Activated CD8-positive, alpha-beta T cell treated with anti-CD3 and anti-CD28 coated beads, Interleukin-2, amount 10 ng/mL, durations not matched to agents 7 days and 5 days (primary cell): ENCODE measurements at regions of chr19 and their contacts with region 1.

Region 1: DNA sequence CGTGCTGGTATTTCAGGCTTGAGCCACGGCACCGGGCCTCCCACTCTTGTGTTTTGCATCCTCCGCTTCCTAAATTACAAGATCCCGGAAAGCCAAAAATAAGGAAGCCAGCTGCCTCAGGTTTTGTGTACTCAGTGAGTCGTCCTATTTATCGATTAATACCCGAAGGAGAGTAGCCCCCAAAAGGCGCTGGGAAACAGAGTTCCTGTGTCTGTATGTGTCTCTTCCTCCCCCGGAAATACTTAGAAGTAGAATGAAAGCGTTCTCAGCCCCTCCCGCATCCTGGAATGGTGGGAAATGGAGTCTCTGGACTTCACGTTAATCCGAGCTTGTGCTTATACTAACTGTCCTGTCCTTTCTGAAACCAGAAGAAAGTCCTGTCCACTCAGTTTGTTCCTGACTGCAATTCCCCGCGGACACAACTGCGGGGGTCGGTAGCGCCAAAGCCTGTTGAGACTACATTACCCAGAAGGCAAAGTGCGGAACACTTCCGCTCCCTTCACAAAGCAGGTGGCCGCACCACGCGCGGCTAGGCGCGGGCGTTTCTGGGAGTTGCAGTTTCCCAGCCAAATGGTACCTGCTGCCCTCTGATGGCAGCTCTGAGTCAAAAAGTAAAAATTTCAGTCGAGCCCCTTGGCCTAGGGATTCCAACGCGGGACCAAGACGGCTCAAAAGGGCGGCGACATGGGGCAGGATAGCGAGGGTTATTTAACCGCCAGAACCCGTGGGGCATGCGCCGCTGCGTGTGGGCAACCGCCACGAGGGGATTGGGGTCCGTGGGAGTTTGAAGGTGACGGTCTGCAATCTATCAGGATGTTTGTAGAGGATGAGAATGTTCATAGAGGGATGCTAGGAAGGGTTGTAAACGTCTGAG is 2.2 kb upstream of the GSK3A start:
- DNase-seq: peak; percentile 96
- ATAC-seq: peak; percentile 47
- H3K4me3 Mint-ChIP-seq: peak overlapping the region; percentile 95
- H3K27ac Mint-ChIP-seq: peak overlapping the region; percentile 96
- H3K4me1 Mint-ChIP-seq: peaks cover 48% of the 10 kb centered on the region
- H3K27me3 Mint-ChIP-seq: no peaks in the 10 kb centered on the region

Region 2: DNA sequence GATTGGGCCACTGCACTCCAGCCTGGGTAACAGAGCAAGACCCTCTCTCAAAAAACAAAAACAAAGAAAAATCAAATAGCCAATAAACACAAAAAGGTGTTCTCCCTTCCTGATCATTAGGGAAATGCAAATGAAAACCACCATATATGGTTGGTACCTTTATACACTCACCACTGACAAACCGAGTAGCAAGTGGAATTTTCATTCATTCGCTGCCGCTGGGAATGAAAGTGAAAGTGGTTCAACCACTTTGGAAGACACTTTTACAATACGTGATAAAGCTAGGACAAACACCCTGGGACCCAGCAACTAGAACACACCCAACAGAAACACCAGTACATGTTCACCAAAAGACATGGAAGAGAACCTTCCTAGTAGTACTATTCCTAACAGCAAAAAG is 195.6 kb before region 1 on chr19:
- CTCF ChIA-PET with region 1: no interaction called
- POLR2A ChIA-PET with region 1: no interaction called
- DNase-seq: peak; percentile 36
- ATAC-seq: peak; percentile 47
- H3K4me3 Mint-ChIP-seq: peak overlapping the region; percentile 27
- H3K27ac Mint-ChIP-seq: peak overlapping the region; percentile 39
- H3K4me1 Mint-ChIP-seq: peaks cover 11% of the 10 kb centered on the region
- H3K27me3 Mint-ChIP-seq: peaks cover 4% of the 10 kb centered on the region

Region 3: DNA sequence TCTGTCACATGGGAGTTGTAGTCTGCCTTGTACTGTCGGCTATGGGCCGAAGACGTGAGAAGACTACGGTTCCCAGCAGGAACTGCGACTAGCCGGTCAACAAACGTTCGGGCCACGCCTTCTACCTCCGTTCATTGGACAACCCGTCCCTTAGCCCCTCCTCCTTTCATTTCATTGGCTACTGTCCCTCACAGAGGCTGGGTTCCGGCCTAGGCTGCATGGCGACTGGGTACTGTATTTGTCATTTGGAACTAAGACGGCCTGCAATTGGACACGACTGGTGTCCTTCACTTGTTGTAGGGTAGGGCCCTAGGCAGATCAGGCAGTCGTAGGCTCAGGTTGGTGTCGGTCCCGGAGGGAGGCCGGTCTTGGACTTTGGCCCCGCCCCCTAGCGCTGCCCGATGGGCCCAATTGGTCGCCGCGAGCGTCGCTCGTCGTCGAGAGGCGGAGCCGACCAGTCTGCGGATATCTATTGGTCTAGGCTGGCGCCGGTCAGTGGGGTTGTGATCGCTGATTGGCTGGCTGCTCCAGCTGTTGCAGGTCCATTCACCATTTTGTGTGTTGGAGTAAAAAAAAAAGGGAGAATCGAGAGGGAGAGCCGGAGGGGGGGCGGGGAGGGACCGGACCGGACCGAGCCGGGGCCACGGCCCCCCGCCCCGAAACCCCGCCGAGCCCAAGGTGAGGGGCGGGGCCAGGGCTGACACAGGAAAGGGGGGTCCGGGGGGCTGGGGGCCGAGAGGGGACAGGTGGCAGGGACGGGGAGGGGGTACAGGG is 24.3 kb after region 1 on chr19 and contains the start of gene CIC:
- CTCF ChIA-PET with region 1: interaction called, 16 read pairs
- POLR2A ChIA-PET with region 1: interaction called, 15 read pairs
- DNase-seq: peak; percentile 100
- ATAC-seq: peak; percentile 89
- H3K4me3 Mint-ChIP-seq: no peak within 1 kb of the TSS
- H3K27ac Mint-ChIP-seq: no peak within 1 kb of the TSS
- H3K4me1 Mint-ChIP-seq: peaks cover 34% of the 10 kb centered on the region
- H3K27me3 Mint-ChIP-seq: no peaks in the 10 kb centered on the region
- total RNA-seq, gene CIC: 73.1 to 83.8 TPM

Region 4: DNA sequence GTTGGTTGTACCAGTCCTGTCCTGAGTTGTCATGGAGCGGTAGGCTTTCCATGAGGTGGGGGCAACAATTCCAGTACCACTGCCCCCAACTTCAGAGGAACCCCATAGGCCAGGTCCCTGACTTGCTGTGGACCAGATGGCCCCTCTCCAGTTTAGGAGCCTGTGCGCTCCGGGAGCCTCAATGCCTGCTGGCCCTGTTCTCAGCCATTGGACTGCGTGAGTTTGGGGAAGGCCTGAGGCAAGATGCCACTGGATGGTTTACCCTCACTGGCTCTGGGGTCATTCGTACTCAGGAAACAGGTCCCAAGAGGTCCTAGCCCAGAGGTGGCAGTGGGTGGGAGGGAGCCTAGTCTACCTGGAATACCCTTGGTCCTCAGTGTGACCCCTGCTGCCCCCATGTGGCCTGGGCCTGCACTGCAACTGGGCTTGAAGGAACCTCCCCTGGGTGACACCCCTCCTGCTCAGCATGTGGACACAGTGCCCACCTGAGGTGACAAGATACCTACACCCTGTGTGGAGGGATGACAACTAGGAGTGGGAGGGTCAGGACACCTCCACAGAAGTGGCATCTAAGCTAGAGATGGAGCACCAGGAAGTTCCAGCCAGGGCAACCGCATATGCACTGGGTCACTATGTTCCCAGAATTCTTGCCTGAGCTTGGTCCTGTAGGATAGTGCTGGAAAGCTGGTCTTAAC is 51.4 kb after region 1 on chr19:
- CTCF ChIA-PET with region 1: interaction called, 11 read pairs
- POLR2A ChIA-PET with region 1: no interaction called
- DNase-seq: peak; percentile 92
- ATAC-seq: peak; percentile 86
- H3K4me3 Mint-ChIP-seq: no peak overlapping the region
- H3K27ac Mint-ChIP-seq: no peak overlapping the region
- H3K4me1 Mint-ChIP-seq: peaks cover 10% of the 10 kb centered on the region
- H3K27me3 Mint-ChIP-seq: no peaks in the 10 kb centered on the region